ENCODE measurements at regions of chr7 and their contacts with region 1.

Region 1: GRCh38 chr7:55365675-55366460 is 731 bp downstream of the LANCL2 start:
- DNase-seq: peak; percentile 95
- H3K4me3 Mint-ChIP-seq: peak overlapping the region; percentile 80
- H3K27ac Mint-ChIP-seq: peak overlapping the region; percentile 98
- H3K4me1 Mint-ChIP-seq: peaks cover 26% of the 10 kb centered on the region
- H3K27me3 Mint-ChIP-seq: no peaks in the 10 kb centered on the region

Region 2: DNA sequence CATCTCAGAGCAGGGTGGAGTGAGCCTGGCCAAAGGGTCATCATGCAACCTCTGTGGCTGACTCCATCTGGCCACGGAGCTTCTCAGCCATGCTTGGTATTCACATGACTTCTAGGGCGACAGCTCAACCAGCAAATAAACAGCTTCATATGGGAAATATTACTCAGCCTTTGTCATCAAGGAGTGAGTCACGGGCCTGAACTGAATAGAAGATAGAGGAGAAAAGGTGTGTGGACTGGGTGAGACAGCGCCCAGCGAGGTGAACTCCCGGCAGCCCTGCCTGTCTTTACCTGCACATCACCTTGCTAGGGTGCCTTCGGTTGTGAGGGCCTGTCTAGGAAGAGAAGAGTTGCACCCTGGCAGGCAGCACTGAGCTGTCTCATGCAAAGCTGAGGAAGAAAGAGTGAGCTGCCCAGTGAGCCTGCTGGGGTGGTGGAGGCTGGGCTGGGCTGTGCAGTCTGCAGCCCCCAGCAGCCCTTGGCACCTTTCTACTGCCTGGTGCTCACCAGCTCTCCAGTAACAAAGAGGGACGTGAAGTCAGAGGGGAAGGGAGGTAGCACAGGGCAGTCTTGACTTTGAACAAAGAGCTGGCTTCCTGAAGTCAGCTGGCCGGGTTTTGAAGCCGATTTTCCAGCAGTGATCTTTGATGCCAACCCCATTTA is 232.8 kb before region 1 on chr7:
- CTCF ChIA-PET with region 1: no interaction called
- POLR2A ChIA-PET with region 1: no interaction called
- intact Hi-C with region 1: loop called (anchors 5 kb)
- DNase-seq: peak; percentile 51
- H3K4me3 Mint-ChIP-seq: no peak overlapping the region
- H3K27ac Mint-ChIP-seq: no peak overlapping the region
- H3K4me1 Mint-ChIP-seq: peaks cover 20% of the 10 kb centered on the region
- H3K27me3 Mint-ChIP-seq: peaks cover 17% of the 10 kb centered on the region

Region 3: DNA sequence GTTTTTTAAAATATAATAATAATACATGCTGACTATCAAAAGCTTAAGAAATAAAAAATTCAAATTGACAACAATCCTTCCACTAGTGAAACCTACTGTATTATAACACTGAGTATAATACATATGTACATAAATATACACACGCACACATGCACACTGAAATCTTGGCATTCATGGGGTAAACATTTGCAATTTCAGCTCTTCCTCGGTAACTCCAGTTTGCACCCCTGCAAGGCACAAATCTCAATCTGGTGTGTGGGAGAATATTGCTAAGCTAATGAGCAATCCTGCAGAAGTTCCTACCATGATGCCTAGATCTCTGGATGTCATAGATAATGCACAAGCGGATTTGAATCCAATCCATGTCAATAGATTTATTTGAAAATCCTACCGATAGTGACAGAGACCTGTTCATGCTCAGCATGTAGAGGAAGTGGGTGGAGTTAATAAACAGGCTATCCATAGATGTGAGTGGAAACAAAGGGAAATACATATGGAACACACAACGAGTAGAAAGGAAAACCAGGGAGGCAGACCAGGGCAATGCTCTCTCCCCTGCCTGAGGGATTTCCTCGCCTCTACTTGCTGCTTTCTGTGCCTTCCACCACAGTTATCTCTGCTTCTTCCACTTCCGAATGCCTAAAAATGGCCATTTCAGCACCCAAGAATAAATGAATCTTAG is 38.8 kb before region 1 on chr7:
- CTCF ChIA-PET with region 1: no interaction called
- POLR2A ChIA-PET with region 1: no interaction called
- intact Hi-C with region 1: no loop called
- DNase-seq: no peak
- H3K4me3 Mint-ChIP-seq: no peak overlapping the region
- H3K27ac Mint-ChIP-seq: no peak overlapping the region
- H3K4me1 Mint-ChIP-seq: no peaks in the 10 kb centered on the region
- H3K27me3 Mint-ChIP-seq: peaks cover 1% of the 10 kb centered on the region

Region 4: GRCh38 chr7:55348499-55348898 is 17.4 kb before region 1 on chr7:
- CTCF ChIA-PET with region 1: no interaction called
- POLR2A ChIA-PET with region 1: no interaction called
- intact Hi-C with region 1: loop called (anchors 2 kb)
- DNase-seq: no peak
- H3K4me3 Mint-ChIP-seq: no peak overlapping the region
- H3K27ac Mint-ChIP-seq: no peak overlapping the region
- H3K4me1 Mint-ChIP-seq: peaks cover 10% of the 10 kb centered on the region
- H3K27me3 Mint-ChIP-seq: peaks cover 20% of the 10 kb centered on the region

Region 5: DNA sequence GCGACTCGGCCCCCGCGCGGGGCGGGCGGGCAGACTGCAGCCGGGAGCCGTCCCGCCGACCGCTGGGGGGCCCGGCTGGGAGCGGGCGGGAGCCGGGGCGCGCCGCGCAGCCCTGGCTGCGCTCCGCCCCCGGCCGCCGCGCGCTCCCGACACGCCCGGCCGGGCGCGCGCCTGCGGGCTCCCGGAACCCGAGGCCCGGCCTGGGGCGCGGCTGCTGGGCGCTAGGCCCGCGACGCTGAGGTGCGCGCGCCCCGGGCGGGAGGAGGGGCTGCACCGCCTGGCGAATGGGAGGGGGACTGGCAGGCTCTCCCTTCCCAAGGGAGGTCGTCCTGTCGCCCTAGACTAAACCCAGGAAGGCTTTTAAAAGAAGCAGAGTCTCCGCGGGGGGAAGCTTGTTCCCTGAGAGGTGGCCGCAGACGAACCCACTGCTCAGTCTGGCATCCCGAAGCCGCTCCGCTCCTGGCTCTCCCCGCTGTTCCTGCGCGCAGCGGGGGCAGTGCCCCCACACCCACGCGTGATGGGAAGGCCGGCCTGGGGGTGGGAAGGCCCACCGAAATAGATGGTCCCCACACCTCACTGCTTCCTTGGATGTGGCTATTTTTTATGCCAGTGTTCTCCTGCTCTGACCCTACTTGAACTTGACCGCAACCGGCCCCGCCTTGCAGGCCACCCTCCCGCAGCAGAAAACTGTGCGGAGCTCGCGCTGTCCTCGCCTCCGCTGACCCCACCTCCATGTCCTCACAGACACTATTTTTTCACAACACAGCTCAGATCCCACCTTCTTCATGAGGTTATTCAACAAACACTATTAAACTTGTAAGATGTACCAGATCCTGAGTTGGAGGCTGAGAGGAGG is 206.7 kb after region 1 on chr7 and contains the start of gene VOPP1:
- CTCF ChIA-PET with region 1: no interaction called
- POLR2A ChIA-PET with region 1: interaction called, 3 read pairs
- intact Hi-C with region 1: loop called (anchors 1 kb)
- DNase-seq: peak; percentile 66
- H3K4me3 Mint-ChIP-seq: peak within 1 kb of the TSS; percentile 89
- H3K27ac Mint-ChIP-seq: peak within 1 kb of the TSS; percentile 93
- H3K4me1 Mint-ChIP-seq: peaks cover 67% of the 10 kb centered on the region
- H3K27me3 Mint-ChIP-seq: no peaks in the 10 kb centered on the region
- total RNA-seq, gene VOPP1: 64.9 to 67.2 TPM

Region 6: DNA sequence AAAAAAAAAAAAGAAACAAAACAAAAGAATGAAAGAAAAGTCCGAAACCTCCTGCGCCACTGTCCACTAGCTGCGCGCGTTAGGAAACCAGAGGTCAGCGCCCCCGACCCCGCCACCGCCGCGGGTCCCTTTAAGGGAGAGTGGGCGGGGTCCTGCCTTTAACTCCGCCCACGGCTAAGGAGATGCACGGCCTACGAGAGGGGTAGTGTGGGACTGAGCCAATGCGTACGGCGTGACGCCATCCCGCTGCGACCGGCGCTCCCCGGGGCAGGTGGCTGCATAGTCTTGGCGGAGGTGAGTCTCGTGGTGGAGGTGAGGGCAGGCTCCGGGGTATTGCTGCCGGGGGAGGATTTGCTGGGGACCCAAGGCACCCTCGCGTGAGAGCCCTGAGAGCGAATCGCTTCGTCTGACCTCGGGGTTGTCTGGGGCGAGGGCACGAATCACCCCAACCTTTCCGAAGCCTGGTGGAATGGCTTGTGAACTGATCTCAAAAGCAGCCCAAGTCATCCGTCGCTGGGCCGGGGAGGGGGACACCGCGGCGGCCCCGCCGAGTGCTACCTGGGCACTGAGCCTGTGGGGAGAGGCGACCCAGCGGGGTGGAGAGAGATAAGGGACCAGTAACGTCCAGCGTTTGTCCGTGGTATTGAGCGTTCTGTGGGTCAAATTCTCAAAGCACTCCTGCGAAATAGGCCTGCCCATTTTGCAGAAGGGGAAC is 585.9 kb after region 1 on chr7 and contains the start of gene MRPS17:
- CTCF ChIA-PET with region 1: no interaction called
- POLR2A ChIA-PET with region 1: no interaction called
- intact Hi-C with region 1: loop called (anchors 1 kb)
- DNase-seq: peak; percentile 96
- H3K4me3 Mint-ChIP-seq: peak within 1 kb of the TSS; percentile 86
- H3K27ac Mint-ChIP-seq: peak within 1 kb of the TSS; percentile 85
- H3K4me1 Mint-ChIP-seq: peaks cover 20% of the 10 kb centered on the region
- H3K27me3 Mint-ChIP-seq: peaks cover 3% of the 10 kb centered on the region
- total RNA-seq, gene MRPS17: 21.7 to 22.3 TPM

Measured in activated CD4-positive, alpha-beta memory T cell treated with anti-CD3 and anti-CD28 coated beads for 36 hours (primary cell).